Activated CD4-positive, alpha-beta memory T cell treated with anti-CD3 and anti-CD28 coated beads, Interleukin-2, amount 10 ng/mL, durations not matched to agents 7 days and 5 days (primary cell): ENCODE measurements at regions of chr5 and their contacts with region 1.

Region 1: DNA sequence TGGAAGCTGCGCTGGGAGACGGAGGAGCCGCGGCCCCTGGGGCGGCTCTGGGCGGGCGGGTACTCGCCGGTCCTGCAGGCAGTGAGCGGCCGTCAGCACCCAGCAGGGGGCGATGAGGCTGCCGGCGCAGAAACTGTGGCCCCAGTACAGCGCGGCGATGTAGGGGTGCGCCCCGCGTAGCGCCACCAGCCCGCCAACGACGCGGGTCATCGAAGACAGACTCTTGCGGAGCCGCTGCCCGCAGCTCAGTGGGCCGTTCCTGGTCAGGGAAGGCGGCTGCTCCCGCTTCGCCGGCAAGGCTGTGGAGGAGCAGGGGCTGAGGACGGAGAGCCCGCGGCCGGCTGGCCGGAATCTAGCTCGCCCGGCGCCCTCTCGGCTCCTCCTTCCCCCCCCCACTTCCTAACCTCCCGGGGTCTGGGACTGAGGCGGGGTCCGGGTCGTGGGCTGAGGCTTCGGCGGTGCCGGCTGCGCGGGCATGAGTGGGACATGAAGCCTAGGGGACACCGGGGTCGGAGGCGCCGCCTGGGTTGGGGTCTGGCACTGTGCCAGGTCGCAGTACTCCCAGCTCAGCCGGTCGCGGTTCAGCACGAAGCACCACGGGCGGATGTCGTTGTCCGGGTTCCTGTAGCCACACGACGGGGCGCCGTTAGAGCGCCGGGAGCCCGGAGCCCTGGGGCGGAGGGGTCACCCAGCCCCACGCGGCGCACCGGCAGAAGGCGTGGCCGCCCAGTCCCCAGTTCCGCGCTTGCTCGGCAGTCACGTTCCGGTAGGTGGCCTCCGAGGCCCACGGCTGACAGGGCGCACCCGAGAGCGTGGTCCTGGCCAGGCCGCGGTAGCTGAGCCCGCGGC is 3.6 kb upstream of the PFN3 start:
- DNase-seq: peak; percentile 86
- H3K4me3 Mint-ChIP-seq: peak overlapping the region; percentile 75
- H3K27ac Mint-ChIP-seq: no peak overlapping the region
- H3K4me1 Mint-ChIP-seq: peaks cover 39% of the 10 kb centered on the region
- H3K27me3 Mint-ChIP-seq: peaks cover 36% of the 10 kb centered on the region

Region 2: DNA sequence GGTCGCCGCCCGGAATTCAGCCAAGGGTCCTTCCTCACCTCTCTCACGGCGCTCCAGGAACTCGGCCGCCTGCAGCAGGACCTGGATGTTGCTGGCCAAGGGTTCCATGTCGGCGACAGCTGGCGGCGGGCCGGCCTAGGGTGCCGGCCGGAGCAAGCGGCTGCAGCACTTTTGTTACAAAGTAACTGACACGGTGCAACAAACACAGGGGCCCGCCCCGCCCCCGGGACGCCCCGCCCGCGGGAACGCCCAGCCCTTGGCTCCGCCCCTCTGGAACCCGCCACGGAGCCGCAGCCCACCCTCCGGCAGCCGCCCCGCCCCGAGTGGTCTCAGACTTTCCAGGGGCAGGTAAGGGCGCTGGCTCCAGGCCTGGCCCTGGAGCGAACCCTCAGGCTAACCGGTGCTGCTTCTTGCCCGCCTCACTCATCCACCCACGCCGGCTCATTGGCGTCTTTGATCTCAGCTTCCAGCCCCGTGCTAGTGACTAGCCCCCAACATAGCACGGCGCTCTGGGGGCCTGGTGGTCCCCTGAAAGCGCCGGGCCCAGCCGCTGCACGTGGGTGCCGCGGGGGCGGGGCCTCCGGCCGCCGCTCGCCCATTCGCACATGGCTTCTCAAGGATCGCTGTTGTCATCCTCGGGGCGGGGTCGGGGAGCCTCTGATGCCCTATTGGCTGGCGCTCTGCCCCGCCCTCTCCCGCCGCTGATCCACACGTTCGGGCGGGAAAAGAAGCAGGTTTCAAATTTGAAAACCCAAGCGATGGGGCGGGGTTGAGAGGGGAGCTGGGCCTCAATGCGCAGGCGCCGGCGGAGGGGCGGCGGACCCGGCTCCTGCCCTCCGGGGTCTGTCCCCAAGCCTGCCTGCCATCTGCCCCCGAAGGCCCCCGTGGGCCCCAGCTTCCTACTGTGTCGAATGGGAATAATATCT is 92.0 kb before region 1 on chr5 and contains the start of gene MXD3:
- CTCF ChIA-PET with region 1: interaction called, 47 read pairs
- POLR2A ChIA-PET with region 1: interaction called, 30 read pairs
- DNase-seq: peak; percentile 99
- H3K4me3 Mint-ChIP-seq: peak within 1 kb of the TSS; percentile 94
- H3K27ac Mint-ChIP-seq: peak within 1 kb of the TSS; percentile 89
- H3K4me1 Mint-ChIP-seq: peaks cover 66% of the 10 kb centered on the region
- H3K27me3 Mint-ChIP-seq: no peaks in the 10 kb centered on the region
- total RNA-seq, gene MXD3: 74.1 to 75.0 TPM

Region 3: GRCh38 chr5:177351385-177352329 is 52.4 kb before region 1 on chr5 and contains the start of gene LMAN2:
- CTCF ChIA-PET with region 1: interaction called, 16 read pairs
- POLR2A ChIA-PET with region 1: interaction called, 14 read pairs
- DNase-seq: peak; percentile 94
- H3K4me3 Mint-ChIP-seq: peak within 1 kb of the TSS; percentile 90
- H3K27ac Mint-ChIP-seq: peak within 1 kb of the TSS; percentile 99
- H3K4me1 Mint-ChIP-seq: peaks cover 70% of the 10 kb centered on the region
- H3K27me3 Mint-ChIP-seq: no peaks in the 10 kb centered on the region
- total RNA-seq, gene LMAN2: 145 to 149 TPM

Region 4: GRCh38 chr5:177370488-177371119 is 33.4 kb before region 1 on chr5:
- CTCF ChIA-PET with region 1: interaction called, 11 read pairs
- POLR2A ChIA-PET with region 1: interaction called, 11 read pairs
- DNase-seq: peak; percentile 79
- H3K4me3 Mint-ChIP-seq: peak overlapping the region; percentile 72
- H3K27ac Mint-ChIP-seq: peak overlapping the region; percentile 56
- H3K4me1 Mint-ChIP-seq: peaks cover 70% of the 10 kb centered on the region
- H3K27me3 Mint-ChIP-seq: no peaks in the 10 kb centered on the region

Region 5: DNA sequence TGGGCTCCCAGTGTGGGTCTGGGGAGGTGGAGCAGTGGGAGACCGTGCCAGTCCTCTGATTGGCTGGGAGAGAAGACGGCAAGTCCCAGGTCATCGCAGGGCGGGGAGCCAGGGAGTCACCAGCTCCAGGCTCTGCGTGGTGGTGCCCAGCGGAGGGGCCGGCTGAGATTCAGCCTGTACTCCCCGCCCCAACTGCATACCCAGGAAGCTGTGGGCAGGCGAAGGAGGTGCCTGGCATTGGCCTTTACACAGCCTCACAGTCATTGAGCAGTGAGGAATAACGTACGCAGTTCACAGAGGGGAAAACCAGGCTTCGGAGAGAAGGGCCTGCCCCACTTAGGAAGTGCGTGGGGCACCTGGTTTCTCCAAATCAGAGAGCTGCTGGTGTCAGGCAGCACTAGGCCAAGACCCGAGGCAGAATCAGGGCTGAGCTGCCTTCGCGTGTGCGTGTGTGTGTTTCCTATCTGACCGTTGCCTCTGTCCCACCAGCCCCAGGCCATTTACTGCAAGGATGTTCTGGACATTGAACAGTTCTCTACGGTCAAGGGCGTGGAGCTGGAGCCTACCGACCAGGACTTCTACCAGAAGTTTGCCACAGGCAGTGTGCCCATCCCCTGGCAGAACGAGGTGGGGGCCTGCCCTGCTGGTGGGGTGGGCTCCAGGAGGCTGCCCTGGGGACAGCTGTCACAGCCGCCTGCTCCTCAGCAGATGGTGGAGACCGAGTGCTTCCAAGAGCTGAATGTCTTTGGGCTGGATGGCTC is 36.4 kb after region 1 on chr5:
- CTCF ChIA-PET with region 1: interaction called, 467 read pairs
- POLR2A ChIA-PET with region 1: interaction called, 371 read pairs
- DNase-seq: no peak
- H3K4me3 Mint-ChIP-seq: peak overlapping the region; percentile 0
- H3K27ac Mint-ChIP-seq: peak overlapping the region; percentile 67
- H3K4me1 Mint-ChIP-seq: peaks cover 69% of the 10 kb centered on the region
- H3K27me3 Mint-ChIP-seq: no peaks in the 10 kb centered on the region

Region 6: GRCh38 chr5:177454397-177455035 is 50.5 kb after region 1 on chr5:
- CTCF ChIA-PET with region 1: interaction called, 467 read pairs
- POLR2A ChIA-PET with region 1: interaction called, 371 read pairs
- DNase-seq: peak; percentile 94
- H3K4me3 Mint-ChIP-seq: peak overlapping the region; percentile 79
- H3K27ac Mint-ChIP-seq: no peak overlapping the region
- H3K4me1 Mint-ChIP-seq: peaks cover 27% of the 10 kb centered on the region
- H3K27me3 Mint-ChIP-seq: peaks cover 17% of the 10 kb centered on the region

Region 7: GRCh38 chr5:177546258-177546741 is 142.3 kb after region 1 on chr5:
- CTCF ChIA-PET with region 1: no interaction called
- POLR2A ChIA-PET with region 1: no interaction called
- DNase-seq: no peak
- H3K4me3 Mint-ChIP-seq: no peak overlapping the region
- H3K27ac Mint-ChIP-seq: no peak overlapping the region
- H3K4me1 Mint-ChIP-seq: peaks cover 8% of the 10 kb centered on the region
- H3K27me3 Mint-ChIP-seq: no peaks in the 10 kb centered on the region